ENCODE measurements at regions of chr19 and their contacts with region 1.

Region 1: DNA sequence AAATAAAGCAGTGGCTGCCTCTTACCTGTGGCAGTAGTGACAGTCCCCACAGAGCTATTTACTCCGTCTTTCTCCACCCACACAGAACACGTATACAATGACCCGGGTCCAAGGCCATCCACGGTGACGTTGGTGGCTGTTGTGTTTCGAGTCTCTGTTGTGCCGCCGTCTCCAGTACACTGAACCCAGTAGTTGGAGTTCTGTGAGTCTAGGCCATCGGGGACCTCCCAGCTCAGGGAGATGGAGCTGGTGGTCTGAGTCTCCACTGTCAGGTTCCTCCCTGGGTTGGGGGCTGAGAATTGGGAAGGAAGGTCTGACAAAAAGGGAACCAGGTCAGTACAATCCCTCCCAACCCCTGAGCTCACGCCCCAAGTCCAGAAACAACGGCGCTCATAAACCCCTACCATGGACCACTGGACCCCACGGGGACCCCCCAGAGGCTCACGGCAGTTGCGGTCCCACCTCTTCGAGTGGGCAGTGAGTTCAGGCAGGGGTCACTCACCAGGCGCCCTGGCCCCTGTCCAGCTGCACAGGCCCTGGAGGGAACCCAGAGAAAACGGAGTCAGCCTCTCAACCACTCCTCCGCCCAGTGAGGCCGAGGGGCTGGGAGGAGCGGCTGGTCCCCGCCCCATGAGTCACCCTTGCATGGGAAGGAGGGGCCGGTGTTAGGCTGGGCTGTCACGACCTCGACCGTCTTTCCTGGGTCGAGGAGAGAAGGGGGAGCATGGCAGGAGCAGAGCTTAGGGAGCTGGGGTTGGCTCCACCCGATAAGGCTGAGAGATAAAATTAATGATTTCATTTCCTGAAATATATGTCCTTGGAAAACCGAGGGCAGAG is 2.4 kb downstream of the PTPRH start:
- DNase-seq: peak; percentile 65
- ATAC-seq: peak; percentile 88
- H3K4me3 ChIP-seq: peak overlapping the region; percentile 60 to 100
- H3K27ac ChIP-seq: peak overlapping the region; percentile 90
- H3K4me1 ChIP-seq: peaks cover 19% of the 10 kb centered on the region
- H3K27me3 ChIP-seq: no peaks in the 10 kb centered on the region
- CTCF ChIP-seq: no peak

Region 2: DNA sequence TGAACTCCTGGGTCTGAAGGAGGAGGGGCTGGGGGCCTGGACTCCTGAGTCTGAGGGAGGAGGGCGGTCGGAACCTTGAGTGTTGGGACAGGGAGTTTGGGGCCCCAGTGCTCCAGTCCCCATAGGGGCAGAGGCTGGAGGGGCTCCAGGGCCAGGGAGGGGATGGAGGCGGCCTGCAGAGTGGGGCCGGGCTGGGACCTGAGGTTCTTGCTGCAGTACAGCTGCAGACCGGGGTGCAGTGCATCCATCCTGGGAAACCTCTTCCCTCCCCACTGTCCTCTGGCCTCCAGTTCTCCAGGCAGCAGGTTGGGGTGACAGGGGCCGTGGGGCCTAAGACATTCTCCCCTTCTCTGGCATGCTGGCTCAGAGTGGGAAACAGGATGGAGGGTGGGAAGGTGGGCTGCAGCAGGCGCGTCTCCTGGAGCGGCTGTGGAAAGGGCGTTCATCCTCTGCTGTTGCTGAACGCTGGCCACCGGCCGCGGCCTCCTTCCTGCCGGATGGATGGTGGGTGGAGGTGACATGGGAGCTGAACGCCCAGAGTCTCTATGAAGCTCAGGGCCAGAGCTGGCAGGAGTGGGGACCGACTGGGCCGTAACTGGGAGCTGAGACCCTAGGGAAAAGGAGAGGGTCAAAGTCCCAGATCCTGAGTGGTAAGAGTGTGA is 78.5 kb after region 1 on chr19:
- CTCF ChIA-PET with region 1: no interaction called
- POLR2A ChIA-PET with region 1: interaction called, 12 read pairs
- in situ Hi-C with region 1: no loop called
- intact Hi-C with region 1: no loop called
- DNase-seq: no peak
- ATAC-seq: peak; percentile 43
- H3K4me3 ChIP-seq: peak overlapping the region in 1 of 2 experiments; percentile 26; a peak in 3 of 4 replicates
- H3K27ac ChIP-seq: no peak overlapping the region
- H3K4me1 ChIP-seq: peaks cover 19% of the 10 kb centered on the region
- H3K27me3 ChIP-seq: no peaks in the 10 kb centered on the region
- CTCF ChIP-seq: no peak

Region 3: GRCh38 chr19:56140583-56141416 is 933.9 kb after region 1 on chr19 and contains the start of gene ZNF444:
- CTCF ChIA-PET with region 1: no interaction called
- POLR2A ChIA-PET with region 1: no interaction called
- in situ Hi-C with region 1: no loop called
- intact Hi-C with region 1: no loop called
- DNase-seq: peak; percentile 97
- ATAC-seq: peak; percentile 95
- H3K4me3 ChIP-seq: peak within 1 kb of the TSS; percentile 61 to 71
- H3K27ac ChIP-seq: peak within 1 kb of the TSS; percentile 84
- H3K4me1 ChIP-seq: peaks cover 23% of the 10 kb centered on the region
- H3K27me3 ChIP-seq: no peaks in the 10 kb centered on the region
- CTCF ChIP-seq: no peak
- total RNA-seq, gene ZNF444: 81.5 TPM

Region 4: DNA sequence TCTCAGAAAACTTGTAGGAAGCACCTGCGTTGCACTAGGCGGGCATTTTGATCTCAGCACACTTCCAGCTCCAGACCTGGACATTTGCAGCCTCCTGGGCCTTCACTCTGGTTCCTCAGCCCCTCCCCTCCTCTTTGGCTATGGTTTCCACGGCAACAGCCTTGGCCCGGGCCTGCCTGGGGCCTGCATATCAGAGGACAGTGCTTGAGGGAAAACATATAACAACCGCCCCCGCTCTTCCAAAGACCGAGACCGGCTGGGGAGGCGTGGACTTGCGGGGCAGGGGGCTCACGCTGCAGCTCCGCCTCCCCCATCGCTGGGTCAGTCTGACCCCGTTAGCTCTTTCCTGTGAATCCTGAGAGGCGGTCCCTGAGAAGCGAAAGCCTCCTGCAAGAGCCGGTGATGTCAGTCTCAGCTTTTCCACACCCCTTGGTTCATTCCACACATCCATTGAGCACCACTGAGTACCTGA is 1759.4 kb after region 1 on chr19:
- CTCF ChIA-PET with region 1: no interaction called
- POLR2A ChIA-PET with region 1: no interaction called
- in situ Hi-C with region 1: no loop called
- intact Hi-C with region 1: no loop called
- DNase-seq: no peak
- ATAC-seq: no peak
- H3K4me3 ChIP-seq: no peak overlapping the region
- H3K27ac ChIP-seq: no peak overlapping the region
- H3K4me1 ChIP-seq: no peaks in the 10 kb centered on the region
- H3K27me3 ChIP-seq: no peaks in the 10 kb centered on the region; the same call in 1 of the 2 replicates
- CTCF ChIP-seq: no peak

Measured in Panc1 (cell line).